Sigmoid colon (tissue), 7 donors: ENCODE measurements at regions of chr9 and their contacts with region 1.

Region 1: DNA sequence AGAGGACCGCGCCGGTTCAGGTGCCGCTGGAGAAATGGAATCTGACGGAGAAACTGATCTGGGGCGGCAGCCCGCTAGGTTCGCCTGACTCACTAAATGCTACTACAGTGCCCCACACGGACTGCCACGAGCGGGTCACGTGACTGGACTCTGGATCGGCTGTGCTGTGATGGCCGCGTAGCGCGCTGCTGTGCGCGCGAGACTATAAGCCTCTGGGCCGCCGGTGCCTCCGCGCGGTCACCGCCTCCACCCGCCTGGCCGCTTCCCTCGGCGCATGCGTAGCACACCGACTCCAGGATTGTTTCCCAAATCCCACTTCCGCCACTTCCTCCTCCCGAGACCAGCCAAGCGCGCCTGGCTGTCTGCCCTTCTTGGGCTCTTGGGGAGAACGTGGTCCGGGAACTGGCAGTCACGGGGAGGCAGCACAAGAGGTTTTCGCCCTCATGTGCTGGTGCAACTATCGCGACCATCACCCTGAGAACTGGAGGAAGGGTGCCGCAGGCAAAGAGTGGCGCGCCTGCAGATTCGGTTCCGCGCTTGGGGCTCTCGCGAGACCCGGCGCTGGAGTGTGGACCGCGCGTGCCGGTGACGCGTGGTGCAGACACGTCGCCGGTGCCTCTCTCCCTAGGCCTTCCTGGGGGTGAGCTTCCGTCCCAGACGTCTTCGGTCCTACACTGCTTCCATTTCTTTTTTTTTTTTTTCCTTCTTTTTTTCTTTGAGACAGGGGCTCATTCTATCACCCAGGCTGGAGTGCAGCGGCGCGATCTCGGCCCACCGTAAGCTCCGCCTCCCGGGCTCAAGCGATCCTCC is 35.8 kb upstream of the GLDC start:
- DNase-seq: peak; percentile 99
- H3K4me3 ChIP-seq: peak overlapping the region; percentile 54 to 73 (median 68)
- H3K27ac ChIP-seq: peak overlapping the region; percentile 95 to 98 (median 96)
- H3K4me1 ChIP-seq: peaks cover 0 to 7% (median 7%) of the 10 kb centered on the region in 4 donors
- H3K27me3 ChIP-seq: no peaks in the 10 kb centered on the region
- CTCF ChIP-seq: no peak
- EP300 ChIP-seq: peak in 1 of 4 donors; percentile 4
- POLR2A ChIP-seq: peak; percentile 56 to 65

Region 2: DNA sequence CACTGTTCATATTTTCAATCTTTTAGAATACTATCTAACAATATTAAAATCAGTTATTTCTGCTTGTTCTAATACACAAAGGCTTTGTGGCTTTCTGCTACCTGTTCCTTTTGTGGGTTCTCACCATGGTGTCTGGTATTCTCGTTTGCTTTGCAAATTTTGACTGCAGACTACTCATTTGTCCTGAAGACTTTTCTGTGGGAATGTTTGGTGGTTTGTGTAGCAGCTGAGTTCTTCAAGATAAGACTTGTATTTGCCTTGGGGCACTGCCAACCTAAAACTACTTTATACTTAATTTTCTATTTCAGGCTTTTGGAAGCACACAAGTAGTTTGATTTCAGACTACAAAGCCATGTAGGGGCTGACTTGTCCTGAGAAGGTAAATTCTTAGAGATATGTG is 454.7 kb before region 1 on chr9:
- intact Hi-C with region 1: loop called (anchors 10 kb)
- DNase-seq: no peak
- H3K4me3 ChIP-seq: no peak overlapping the region
- H3K27ac ChIP-seq: peak overlapping the region in 2 of 4 donors; percentile 15 to 18
- H3K4me1 ChIP-seq: peaks cover 0 to 67% (median 52%) of the 10 kb centered on the region in 4 donors
- H3K27me3 ChIP-seq: no peaks in the 10 kb centered on the region
- CTCF ChIP-seq: no peak
- EP300 ChIP-seq: no peak
- POLR2A ChIP-seq: no peak

Region 3: DNA sequence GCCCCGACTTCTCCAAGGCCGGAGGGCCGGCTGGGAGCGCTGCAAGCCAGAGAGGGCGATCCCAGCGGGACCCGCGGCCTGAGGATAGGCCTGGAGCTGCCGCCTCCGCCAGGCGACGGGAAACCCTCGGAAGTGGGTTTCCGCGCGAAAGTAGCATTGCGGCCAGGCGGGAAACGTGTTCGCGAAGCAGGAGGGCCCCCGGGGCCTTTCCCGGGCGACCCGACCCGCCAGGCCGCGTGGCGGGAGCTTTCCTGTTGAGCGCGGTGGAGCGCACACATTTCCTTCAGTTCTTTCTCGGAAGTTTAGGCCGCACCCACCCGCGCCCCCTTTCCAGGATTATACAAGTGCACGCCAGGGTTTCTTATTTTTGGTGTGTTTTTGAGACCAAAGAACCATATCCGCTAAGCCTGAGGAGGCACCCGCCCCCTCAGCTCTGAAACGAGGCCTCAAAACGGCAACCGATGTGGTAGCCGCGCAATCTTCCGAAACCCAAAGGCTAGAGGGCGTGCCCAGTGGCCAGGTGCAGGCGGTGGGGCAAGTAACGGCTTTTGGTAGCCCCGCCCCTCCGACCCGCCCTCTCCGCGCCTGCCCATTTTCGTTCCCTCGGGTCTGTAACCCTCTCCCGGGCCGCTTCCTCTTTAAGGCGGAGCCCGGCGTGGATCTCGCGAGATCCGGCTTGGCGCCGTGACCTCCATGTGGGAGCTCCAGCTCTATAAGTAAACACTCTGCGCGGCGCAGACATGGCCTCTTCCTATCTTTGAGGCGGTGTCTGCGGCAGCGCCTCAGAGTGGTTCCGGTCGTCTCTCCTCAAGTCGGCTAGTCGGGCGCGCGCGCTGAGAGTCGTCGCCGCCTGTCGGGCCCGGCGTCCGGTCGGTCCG is 268.6 kb before region 1 on chr9 and contains the start of gene UHRF2:
- intact Hi-C with region 1: loop called (anchors 5 kb)
- DNase-seq: peak; percentile 99
- H3K4me3 ChIP-seq: peak within 1 kb of the TSS; percentile 79 to 99 (median 88)
- H3K27ac ChIP-seq: peak within 1 kb of the TSS; percentile 86 to 90 (median 90)
- H3K4me1 ChIP-seq: peaks cover 0 to 43% (median 28%) of the 10 kb centered on the region in 4 donors
- H3K27me3 ChIP-seq: no peaks in the 10 kb centered on the region
- CTCF ChIP-seq: no peak
- EP300 ChIP-seq: no peak
- POLR2A ChIP-seq: peak; percentile 45 to 46
- total RNA-seq, gene UHRF2: 49.1 to 55.6 (median 53.6) TPM

Region 4: DNA sequence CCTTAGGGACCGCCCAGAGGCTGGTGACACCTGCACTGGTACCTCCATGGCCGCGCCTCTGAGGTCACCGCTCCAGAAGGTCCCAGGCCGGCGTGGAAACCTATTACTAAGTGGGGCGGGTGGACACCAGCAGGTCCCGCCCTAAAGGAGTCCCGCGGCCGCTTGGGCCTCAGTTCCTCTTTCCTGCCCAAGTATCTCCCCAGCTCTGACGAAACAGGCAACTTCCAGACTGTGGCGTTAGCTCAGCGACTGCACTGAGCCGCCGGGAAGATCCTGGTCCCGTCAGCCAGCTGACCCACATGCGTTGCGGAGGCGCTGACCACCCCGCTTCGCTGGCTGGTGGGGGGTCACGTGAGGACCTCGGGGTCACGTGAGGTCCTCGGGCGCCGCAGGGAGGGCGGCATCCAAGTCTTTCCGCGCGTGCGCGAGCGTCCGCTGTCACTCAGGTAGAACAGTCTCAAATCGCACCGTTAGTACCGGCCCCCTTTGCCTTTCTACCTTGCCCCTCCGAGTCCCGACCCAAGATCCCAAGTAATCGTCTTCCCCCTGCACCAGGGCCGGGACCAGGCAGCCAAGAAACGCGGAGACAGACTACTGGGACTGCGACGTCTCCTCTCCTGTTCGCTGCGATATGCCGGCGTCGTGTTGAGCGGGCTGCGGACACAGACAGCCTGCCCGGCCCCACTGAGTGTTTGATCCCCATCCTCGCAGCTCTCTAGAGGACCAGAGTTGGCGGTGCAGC is 22.7 kb after region 1 on chr9:
- intact Hi-C with region 1: loop called (anchors 1 kb)
- DNase-seq: peak; percentile 93
- H3K4me3 ChIP-seq: peak overlapping the region; percentile 51 to 66 (median 52)
- H3K27ac ChIP-seq: peak overlapping the region; percentile 73 to 87 (median 75)
- H3K4me1 ChIP-seq: peaks cover 0 to 10% (median 0%) of the 10 kb centered on the region in 4 donors
- H3K27me3 ChIP-seq: no peaks in the 10 kb centered on the region
- CTCF ChIP-seq: no peak
- EP300 ChIP-seq: no peak
- POLR2A ChIP-seq: peak in 1 of 2 donors; percentile 18

Region 5: GRCh38 chr9:6757456-6758247 is 76.3 kb after region 1 on chr9 and contains the start of gene KDM4C:
- intact Hi-C with region 1: loop called (anchors 1 kb)
- DNase-seq: peak; percentile 98
- H3K4me3 ChIP-seq: peak within 1 kb of the TSS; percentile 74 to 99 (median 89)
- H3K27ac ChIP-seq: peak within 1 kb of the TSS; percentile 95 to 99 (median 98)
- H3K4me1 ChIP-seq: peaks cover 0 to 19% (median 10%) of the 10 kb centered on the region in 4 donors
- H3K27me3 ChIP-seq: no peaks in the 10 kb centered on the region
- CTCF ChIP-seq: no peak
- EP300 ChIP-seq: peak in 2 of 4 donors; percentile 36 to 64
- POLR2A ChIP-seq: peak; percentile 74 to 88
- total RNA-seq, gene KDM4C: 28.8 to 33.5 (median 29.8) TPM